T-cell (primary cell): ENCODE measurements at regions of chr12 and their contacts with region 1.

Region 1: DNA sequence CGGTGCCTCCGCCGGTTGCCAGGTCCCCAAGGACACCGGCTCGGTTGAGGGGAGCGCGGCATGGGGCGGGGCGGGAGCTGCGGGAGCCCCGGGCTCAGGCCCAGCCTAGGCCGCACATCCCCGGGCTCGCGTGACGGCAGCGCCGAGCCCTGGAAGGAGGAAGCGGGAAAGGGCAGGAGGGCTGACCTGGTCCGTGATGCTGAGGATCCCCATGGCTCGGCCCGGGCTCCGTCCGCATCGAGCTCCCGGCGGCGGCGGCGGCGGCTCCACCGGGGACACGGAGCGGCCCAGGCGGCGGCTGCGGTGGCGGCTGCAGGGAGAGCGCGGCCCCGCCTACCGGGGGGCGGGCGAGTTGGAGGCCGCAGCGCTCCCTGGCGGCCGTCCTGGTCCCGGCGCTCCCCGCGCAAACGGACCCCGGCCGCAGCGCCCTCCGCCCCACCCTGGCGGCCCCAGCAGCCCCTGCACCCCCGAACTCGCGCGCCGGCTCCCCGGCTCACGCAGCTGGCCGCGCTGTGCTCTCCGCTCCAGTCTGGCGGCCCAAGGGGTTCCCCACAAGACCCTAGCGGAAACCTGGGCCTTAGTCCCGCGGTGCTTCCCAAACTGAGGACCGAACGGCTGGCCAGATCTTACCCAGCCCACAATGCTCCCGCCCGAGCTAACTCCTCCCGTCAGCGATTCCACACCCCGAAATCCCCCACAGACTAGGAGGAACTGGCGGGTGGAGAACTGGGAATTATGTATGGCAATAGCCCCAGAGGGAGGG is at the start of gene ANKRD52:
- DNase-seq: peak; percentile 47 to 93 (median 73)
- ATAC-seq: peak; percentile 94 to 97 (median 96)
- H3K4me3 ChIP-seq: peak within 1 kb of the TSS; percentile 77 to 82
- H3K4me3 Mint-ChIP-seq: peak within 1 kb of the TSS; percentile 81 to 92 (median 90)
- H3K27ac ChIP-seq: peak within 1 kb of the TSS; percentile 71
- H3K27ac Mint-ChIP-seq: peak within 1 kb of the TSS; percentile 86 to 90
- H3K4me1 ChIP-seq: peaks cover 7 to 27% of the 10 kb centered on the region in 2 experiments
- H3K4me1 Mint-ChIP-seq: peaks cover 20 to 25% (median 24%) of the 10 kb centered on the region in 3 donors
- H3K27me3 ChIP-seq: no peaks in the 10 kb centered on the region
- H3K27me3 Mint-ChIP-seq: no peaks in the 10 kb centered on the region
- total RNA-seq, gene ANKRD52: 35.8 to 51.0 (median 43.1) TPM

Region 2: GRCh38 chr12:56041552-56042429 is 216.4 kb before region 1 on chr12 and contains the start of gene RPS26:
- CTCF ChIA-PET with region 1: interaction called in 1 of 2 experiments, 10 read pairs
- POLR2A ChIA-PET with region 1: no interaction called
- DNase-seq: peak; percentile 80 to 98 (median 92)
- ATAC-seq: peak; percentile 90 to 94 (median 92)
- H3K4me3 ChIP-seq: peak within 1 kb of the TSS; percentile 74 to 89
- H3K4me3 Mint-ChIP-seq: peak within 1 kb of the TSS; percentile 91 to 99 (median 99)
- H3K27ac ChIP-seq: peak within 1 kb of the TSS; percentile 71
- H3K27ac Mint-ChIP-seq: peak within 1 kb of the TSS; percentile 98 to 99
- H3K4me1 ChIP-seq: peaks cover 23 to 33% of the 10 kb centered on the region in 2 experiments
- H3K4me1 Mint-ChIP-seq: peaks cover 32 to 52% (median 40%) of the 10 kb centered on the region in 3 donors
- H3K27me3 ChIP-seq: no peaks in the 10 kb centered on the region
- H3K27me3 Mint-ChIP-seq: no peaks in the 10 kb centered on the region
- total RNA-seq, gene RPS26: 30.3 to 141 (median 49.9) TPM